ENCODE measurements at regions of chr18 and their contacts with region 1.

Region 1: GRCh38 chr18:36284671-36285295 is 12.7 kb upstream of the FHOD3 start:
- DNase-seq: no peak
- ATAC-seq: peak; percentile 78 to 88 (median 86)
- H3K4me3 ChIP-seq: no peak overlapping the region
- H3K27ac ChIP-seq: no peak overlapping the region
- H3K4me1 ChIP-seq: no peaks in the 10 kb centered on the region
- H3K27me3 ChIP-seq: no peaks in the 10 kb centered on the region
- CTCF ChIP-seq: peak; percentile 77 to 94 (median 84)
- POLR2A ChIP-seq: no peak

Region 2: GRCh38 chr18:36015629-36016028 is 269.2 kb before region 1 on chr18:
- intact Hi-C with region 1: loop called in 1 of 2 experiments (anchors 5 kb)
- DNase-seq: no peak
- ATAC-seq: no peak
- H3K4me3 ChIP-seq: no peak overlapping the region
- H3K27ac ChIP-seq: no peak overlapping the region
- H3K4me1 ChIP-seq: no peaks in the 10 kb centered on the region
- H3K27me3 ChIP-seq: no peaks in the 10 kb centered on the region
- CTCF ChIP-seq: no peak
- POLR2A ChIP-seq: no peak

Region 3: GRCh38 chr18:36095936-36096519 is 188.8 kb before region 1 on chr18:
- intact Hi-C with region 1: loop called (anchors 5 kb)
- DNase-seq: no peak
- ATAC-seq: peak; percentile 67 to 80 (median 70)
- H3K4me3 ChIP-seq: no peak overlapping the region
- H3K27ac ChIP-seq: no peak overlapping the region
- H3K4me1 ChIP-seq: no peaks in the 10 kb centered on the region
- H3K27me3 ChIP-seq: no peaks in the 10 kb centered on the region
- CTCF ChIP-seq: peak; percentile 56 to 76 (median 62)
- POLR2A ChIP-seq: no peak

Region 4: GRCh38 chr18:36101943-36102342 is 182.8 kb before region 1 on chr18:
- intact Hi-C with region 1: loop called (anchors 5 kb)
- DNase-seq: no peak
- ATAC-seq: no peak
- H3K4me3 ChIP-seq: no peak overlapping the region
- H3K27ac ChIP-seq: no peak overlapping the region
- H3K4me1 ChIP-seq: no peaks in the 10 kb centered on the region
- H3K27me3 ChIP-seq: no peaks in the 10 kb centered on the region
- CTCF ChIP-seq: no peak
- POLR2A ChIP-seq: no peak

Measured in right lobe of liver (tissue), 6 donors.